Mammary epithelial cell (primary cell): ENCODE measurements at regions of chr16 and their contacts with region 1.

Region 1: DNA sequence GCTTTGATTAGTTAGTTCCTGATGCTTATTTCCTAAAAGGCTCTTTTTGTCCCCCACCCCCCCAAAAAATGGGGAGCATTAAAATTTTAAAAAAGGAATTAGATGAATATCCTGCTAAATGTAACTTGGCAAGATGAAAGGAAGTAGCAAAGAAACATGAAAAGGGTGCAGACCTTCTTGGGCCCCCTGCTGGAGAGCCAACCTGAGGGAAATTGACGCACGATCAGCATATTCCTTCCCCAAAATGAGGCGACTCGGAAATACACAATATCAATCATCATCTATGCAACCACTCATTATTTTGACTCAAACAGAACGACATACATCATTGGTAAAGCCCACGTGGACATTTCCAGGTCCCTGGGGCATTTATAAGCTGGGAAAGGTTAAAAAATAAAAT is 59.7 kb downstream of the GRIN2A start:
- DNase-seq: no peak
- H3K4me3 ChIP-seq: no peak overlapping the region
- H3K27ac ChIP-seq: no peak overlapping the region
- H3K4me1 ChIP-seq: peaks cover 21% of the 10 kb centered on the region
- H3K27me3 ChIP-seq: no peaks in the 10 kb centered on the region
- CTCF ChIP-seq: peak; percentile 24 to 39

Region 2: DNA sequence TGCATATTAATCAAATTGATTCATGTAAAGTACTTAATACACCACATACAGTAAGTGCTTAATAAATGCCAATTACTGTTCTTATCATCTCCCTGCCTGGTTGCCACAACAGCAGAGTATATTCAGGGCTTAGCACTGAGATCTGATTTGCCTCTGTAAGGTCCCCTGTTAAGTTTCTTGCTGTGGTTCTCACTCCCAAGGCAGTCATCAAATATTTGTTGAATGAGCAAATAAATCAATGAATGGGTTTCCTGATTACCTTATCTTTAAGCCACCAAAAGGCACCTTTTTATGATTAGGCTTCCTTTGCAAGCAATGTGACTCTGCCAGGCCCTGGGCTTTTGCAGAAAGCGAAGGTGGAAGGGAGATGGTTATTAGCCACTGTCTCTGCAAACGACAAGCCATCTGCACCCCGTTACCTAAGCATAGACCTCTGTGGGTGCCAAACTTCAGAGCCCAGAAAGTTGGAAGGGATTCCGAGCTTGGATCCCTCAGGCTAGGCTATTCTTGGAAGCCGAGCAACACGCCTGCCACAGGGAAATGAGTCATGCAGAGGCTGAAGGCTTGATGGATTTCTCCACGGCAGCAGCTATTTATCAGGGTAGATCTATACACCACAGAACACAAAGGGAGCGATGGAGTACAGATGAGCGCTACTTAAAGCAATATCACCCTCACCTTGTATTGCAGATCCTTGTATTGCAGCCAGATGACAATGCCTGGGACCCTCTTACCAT is 42.3 kb before region 1 on chr16:
- CTCF ChIA-PET with region 1: no interaction called
- dilution Hi-C with region 1: loop called (anchors 5 kb)
- in situ Hi-C with region 1: no loop called
- intact Hi-C with region 1: loop called (anchors 5 kb)
- DNase-seq: peak; percentile 93
- H3K4me3 ChIP-seq: no peak overlapping the region
- H3K27ac ChIP-seq: no peak overlapping the region
- H3K4me1 ChIP-seq: peaks cover 23% of the 10 kb centered on the region
- H3K27me3 ChIP-seq: no peaks in the 10 kb centered on the region
- CTCF ChIP-seq: no peak

Region 3: GRCh38 chr16:10218490-10219206 is 96.1 kb after region 1 on chr16:
- CTCF ChIA-PET with region 1: no interaction called
- dilution Hi-C with region 1: loop called (anchors 5 kb)
- in situ Hi-C with region 1: no loop called
- intact Hi-C with region 1: no loop called
- DNase-seq: no peak
- H3K4me3 ChIP-seq: no peak overlapping the region
- H3K27ac ChIP-seq: no peak overlapping the region
- H3K4me1 ChIP-seq: no peaks in the 10 kb centered on the region
- H3K27me3 ChIP-seq: no peaks in the 10 kb centered on the region
- CTCF ChIP-seq: no peak